Posterior vena cava (tissue), 2 donors: ENCODE measurements at regions of chr5 and their contacts with region 1.

Region 1: DNA sequence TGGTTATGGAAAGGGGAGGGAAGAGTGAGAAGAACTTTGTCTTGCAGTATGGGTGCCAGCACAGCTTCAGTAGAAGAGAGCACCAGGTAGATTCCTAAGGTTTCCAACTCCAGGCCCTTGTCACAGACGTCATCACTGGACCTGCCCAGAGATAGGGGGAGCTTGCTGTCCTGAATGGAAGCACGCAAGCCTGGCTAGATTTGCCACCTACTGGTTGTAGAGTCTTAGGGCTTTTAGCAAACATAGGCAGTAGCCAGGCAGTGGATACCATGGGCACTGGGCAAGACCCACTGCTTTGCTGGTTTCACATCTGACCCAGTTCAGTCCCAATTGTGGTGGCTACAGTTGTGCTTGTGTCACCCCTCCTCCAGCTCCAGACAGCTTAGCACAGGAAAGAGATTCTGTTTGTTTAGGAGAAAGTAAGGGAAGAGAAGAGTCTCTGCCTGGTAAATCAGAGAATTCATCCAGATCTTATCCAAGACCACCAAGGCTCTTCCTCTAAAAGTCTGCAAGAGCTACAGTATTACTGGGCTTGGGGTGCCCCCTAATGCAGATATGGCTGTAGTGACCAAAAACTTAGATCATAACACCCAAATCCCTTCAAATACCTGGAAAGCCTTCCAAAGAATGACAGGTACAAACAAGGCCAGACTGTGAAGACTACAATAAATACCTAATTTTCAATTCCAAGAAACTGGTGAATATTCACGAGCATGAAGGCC is 158.9 kb downstream of the HINT1 start:
- DNase-seq: no peak

Region 2: GRCh38 chr5:130992095-130992494 is 14.0 kb before region 1 on chr5:
- intact Hi-C with region 1: loop called in 1 of 2 experiments (anchors 1 kb)
- DNase-seq: no peak